CD8-positive, alpha-beta T cell (primary cell): ENCODE measurements at regions of chr1 and their contacts with region 1.

Region 1: GRCh38 chr1:32215629-32216480 is 6.3 kb downstream of the TMEM234 start:
- DNase-seq: peak in 8 of 9 experiments; percentile 16 to 74 (median 60)
- ATAC-seq: peak; percentile 97
- H3K4me3 ChIP-seq: no peak overlapping the region
- H3K4me3 Mint-ChIP-seq: no peak overlapping the region
- H3K27ac ChIP-seq: no peak overlapping the region
- H3K27ac Mint-ChIP-seq: peak overlapping the region; percentile 67
- H3K4me1 ChIP-seq: peaks cover 10% of the 10 kb centered on the region
- H3K4me1 Mint-ChIP-seq: peaks cover 14% of the 10 kb centered on the region
- H3K27me3 ChIP-seq: no peaks in the 10 kb centered on the region
- H3K27me3 Mint-ChIP-seq: no peaks in the 10 kb centered on the region
- CTCF ChIP-seq: peak; percentile 66

Region 2: DNA sequence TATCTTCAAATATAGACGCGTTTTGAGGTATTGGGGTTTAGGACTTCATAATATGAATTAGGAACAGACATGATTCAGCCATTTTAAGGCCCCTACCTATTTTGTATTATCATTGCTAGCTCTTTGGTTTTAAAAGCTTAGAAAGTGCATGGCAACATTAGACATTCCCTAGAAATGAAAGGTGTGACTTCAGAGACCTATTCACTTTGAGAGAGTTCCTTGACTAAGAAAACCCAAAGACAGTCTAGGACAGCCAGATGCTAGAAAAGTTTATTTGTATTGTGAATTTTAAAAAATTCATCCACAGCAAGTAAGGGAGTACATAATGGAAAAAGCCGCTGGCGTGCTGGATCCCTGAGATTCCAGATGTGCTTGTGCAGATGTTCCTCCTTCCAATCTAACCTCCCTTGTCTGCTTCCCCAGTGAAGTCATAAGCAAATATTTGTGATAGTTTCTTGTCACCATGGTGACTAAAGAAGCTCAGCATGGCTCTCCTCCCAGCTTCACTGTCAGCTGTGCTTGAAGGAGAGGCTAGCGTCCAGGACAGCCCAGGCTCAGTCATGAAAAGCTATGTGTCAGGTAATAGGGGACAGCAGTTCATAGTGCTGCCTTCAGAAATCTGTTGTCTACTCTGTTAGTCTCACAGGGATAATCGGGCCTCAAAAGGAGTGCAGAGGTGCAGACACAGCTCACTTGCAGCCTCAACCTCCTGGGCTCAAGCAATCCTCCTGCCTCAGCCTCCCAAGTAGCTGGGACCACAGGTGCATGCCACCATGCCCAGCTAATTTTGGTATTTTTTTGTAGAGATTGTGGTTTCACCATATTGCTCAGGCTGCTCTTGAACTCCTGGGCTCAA is 73.2 kb before region 1 on chr1:
- CTCF ChIA-PET with region 1: no interaction called
- POLR2A ChIA-PET with region 1: no interaction called
- intact Hi-C with region 1: no loop called
- DNase-seq: no peak
- ATAC-seq: no peak
- H3K4me3 ChIP-seq: no peak overlapping the region
- H3K4me3 Mint-ChIP-seq: no peak overlapping the region
- H3K27ac ChIP-seq: no peak overlapping the region
- H3K27ac Mint-ChIP-seq: peak overlapping the region; percentile 53
- H3K4me1 ChIP-seq: peaks cover 10% of the 10 kb centered on the region
- H3K4me1 Mint-ChIP-seq: peaks cover 61% of the 10 kb centered on the region
- H3K27me3 ChIP-seq: no peaks in the 10 kb centered on the region
- H3K27me3 Mint-ChIP-seq: no peaks in the 10 kb centered on the region
- CTCF ChIP-seq: no peak

Region 3: DNA sequence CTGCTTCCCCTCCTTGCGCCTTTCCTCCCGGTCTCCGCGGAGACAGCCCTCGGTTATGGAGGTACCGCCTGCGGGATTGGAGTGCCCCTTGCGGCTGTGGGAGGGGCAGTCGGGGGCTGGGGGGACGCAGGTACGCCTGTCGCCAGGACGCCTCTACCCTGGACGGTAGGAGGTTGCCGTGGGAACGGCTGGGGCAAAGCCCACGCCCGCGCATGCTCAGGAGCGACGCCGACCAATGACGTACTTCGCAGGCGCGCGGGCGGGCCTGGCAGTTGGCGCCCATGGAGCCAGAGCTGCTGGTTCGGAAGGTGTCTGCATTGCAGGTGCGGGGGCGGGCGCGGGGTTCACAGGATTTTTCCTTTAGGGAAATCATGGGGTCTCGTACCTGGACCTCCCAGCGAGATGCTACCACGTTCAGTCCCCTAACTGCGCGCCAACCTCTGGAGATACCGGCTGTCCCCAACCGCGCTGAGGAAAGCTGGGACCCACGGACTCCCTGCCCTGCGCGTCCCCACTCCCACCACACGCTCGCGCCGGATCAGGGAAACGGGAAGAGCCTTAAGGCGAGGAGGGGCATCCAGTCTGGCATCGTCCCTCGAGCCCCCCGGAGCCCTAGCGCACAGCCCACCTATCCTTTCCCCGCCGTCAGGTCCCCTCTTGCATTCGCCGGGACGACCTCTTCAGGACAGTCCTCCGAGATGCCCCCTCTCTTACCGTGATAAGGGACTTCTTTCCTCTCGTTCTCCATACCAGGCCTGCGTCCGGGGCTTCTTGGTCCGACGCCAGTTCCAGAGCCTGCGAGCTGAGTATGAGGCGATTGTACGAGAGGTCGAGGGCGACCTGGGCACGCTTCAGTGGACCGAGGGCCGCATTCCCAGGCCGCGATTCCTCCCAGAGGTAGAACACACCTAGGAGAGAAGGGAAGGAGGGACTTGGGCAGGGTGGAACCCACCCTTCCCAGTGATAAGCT is 10.2 kb before region 1 on chr1 and contains the start of gene IQCC:
- CTCF ChIA-PET with region 1: interaction called, 23 read pairs
- POLR2A ChIA-PET with region 1: interaction called, 8 read pairs
- intact Hi-C with region 1: no loop called
- DNase-seq: peak; percentile 68 to 94 (median 85)
- ATAC-seq: peak; percentile 57
- H3K4me3 ChIP-seq: peak within 1 kb of the TSS; percentile 65 to 77
- H3K4me3 Mint-ChIP-seq: peak within 1 kb of the TSS; percentile 87
- H3K27ac ChIP-seq: peak within 1 kb of the TSS; percentile 62 to 67
- H3K27ac Mint-ChIP-seq: peak within 1 kb of the TSS; percentile 84
- H3K4me1 ChIP-seq: peaks cover 30% of the 10 kb centered on the region
- H3K4me1 Mint-ChIP-seq: peaks cover 36% of the 10 kb centered on the region
- H3K27me3 ChIP-seq: no peaks in the 10 kb centered on the region
- H3K27me3 Mint-ChIP-seq: no peaks in the 10 kb centered on the region
- CTCF ChIP-seq: no peak
- total RNA-seq, gene IQCC: 1.3 to 2.0 TPM

Region 4: GRCh38 chr1:32240140-32240951 is 24.5 kb after region 1 on chr1:
- CTCF ChIA-PET with region 1: interaction called, 11 read pairs
- POLR2A ChIA-PET with region 1: interaction called, 5 read pairs
- intact Hi-C with region 1: no loop called
- DNase-seq: peak in 8 of 9 experiments; percentile 26 to 85 (median 76)
- ATAC-seq: peak; percentile 69
- H3K4me3 ChIP-seq: peak overlapping the region; percentile 76 to 89
- H3K4me3 Mint-ChIP-seq: peak overlapping the region; percentile 90
- H3K27ac ChIP-seq: peak overlapping the region; percentile 22 to 49
- H3K27ac Mint-ChIP-seq: peak overlapping the region; percentile 62
- H3K4me1 ChIP-seq: peaks cover 26% of the 10 kb centered on the region
- H3K4me1 Mint-ChIP-seq: peaks cover 23% of the 10 kb centered on the region
- H3K27me3 ChIP-seq: no peaks in the 10 kb centered on the region
- H3K27me3 Mint-ChIP-seq: no peaks in the 10 kb centered on the region
- CTCF ChIP-seq: peak; percentile 24

Region 5: DNA sequence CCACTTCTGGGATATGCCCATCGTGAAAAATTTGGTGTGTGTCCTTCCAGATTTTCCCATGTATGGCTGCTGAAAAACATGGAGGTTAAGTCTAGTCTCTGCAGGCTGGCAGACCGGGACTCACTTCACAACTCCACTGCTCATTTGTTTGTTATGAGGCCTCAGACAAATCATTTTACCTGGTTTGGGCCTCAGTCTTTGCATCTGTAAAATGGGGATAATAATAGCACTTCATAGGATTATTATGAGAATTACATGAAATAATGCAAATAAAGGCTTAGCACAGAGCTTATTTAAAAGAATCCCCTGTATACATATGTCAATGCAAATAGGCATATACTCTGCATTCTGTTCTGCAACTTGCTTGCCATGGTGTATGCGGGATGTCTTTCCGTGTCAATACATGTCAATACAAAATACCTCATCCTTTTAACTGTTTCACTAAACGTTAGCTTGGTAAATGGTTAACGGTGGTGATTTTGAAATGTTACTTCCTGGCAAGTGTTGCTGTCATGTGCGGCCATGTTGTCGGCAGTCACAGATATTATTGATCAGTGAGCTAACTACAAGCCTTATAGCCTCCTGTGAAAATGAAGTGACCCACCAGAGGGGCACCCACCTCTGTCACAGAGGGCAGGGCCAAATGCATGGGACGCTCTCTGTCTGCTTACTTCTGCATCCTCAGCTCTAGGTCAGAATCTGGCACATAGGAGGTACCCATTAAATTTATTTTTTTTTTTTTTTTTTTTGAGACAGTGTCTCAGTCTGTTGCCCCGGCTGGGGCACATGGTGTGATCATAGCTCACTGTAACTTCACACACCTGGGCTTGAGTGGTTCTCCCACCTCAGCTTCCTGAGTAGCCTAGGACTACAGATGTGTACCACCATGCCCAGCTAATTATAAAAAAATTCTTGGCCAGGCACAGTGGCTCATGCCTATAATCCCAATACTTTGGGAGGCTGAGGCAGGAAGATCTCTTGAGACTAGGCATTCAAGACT is 39.5 kb after region 1 on chr1:
- CTCF ChIA-PET with region 1: interaction called, 33 read pairs
- POLR2A ChIA-PET with region 1: interaction called, 5 read pairs
- intact Hi-C with region 1: no loop called
- DNase-seq: peak in 3 of 9 experiments; percentile 34 to 58 (median 35)
- ATAC-seq: peak; percentile 13
- H3K4me3 ChIP-seq: peak overlapping the region; percentile 45 to 84
- H3K4me3 Mint-ChIP-seq: peak overlapping the region; percentile 87
- H3K27ac ChIP-seq: peak overlapping the region; percentile 38 to 93
- H3K27ac Mint-ChIP-seq: peak overlapping the region; percentile 99
- H3K4me1 ChIP-seq: peaks cover 44% of the 10 kb centered on the region
- H3K4me1 Mint-ChIP-seq: peaks cover 55% of the 10 kb centered on the region
- H3K27me3 ChIP-seq: no peaks in the 10 kb centered on the region
- H3K27me3 Mint-ChIP-seq: no peaks in the 10 kb centered on the region
- CTCF ChIP-seq: no peak

Region 6: DNA sequence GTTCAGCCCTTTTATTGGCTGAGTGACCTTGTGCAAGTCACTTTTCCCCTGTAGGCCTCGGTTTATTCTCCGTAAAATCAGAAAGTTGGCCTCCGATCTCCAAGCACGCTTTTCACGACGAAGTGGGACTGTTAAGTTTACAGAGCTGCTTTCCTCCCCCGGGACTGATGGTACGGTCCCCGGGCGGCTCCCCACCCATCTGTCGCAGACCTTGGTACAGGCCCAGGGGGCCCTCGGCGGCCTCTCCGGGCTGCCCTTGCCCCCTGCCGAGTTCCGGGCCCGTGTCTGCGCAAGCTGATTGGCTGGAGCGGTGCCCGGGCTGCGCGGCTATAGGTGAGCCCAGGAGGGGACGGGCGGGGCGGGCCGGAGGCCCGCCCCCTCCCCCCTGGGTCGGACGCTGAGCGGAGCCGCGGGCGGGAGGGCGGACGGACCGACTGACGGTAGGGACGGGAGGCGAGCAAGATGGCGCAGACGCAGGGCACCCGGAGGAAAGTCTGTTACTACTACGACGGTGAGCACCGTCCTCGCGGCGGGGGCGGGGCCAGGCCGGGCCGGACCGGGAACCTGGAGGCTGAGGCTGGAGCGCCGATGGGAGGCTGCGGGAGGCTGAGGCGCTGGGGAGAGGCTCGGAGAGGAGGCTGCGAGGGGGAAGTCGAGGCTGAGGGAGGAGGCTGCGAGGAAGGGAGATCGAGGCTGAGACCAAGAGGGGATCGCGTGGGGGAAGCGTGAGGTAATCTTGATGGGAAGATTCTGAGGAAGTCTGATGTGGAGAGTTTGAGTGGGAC is 76.0 kb after region 1 on chr1 and contains the start of gene HDAC1:
- CTCF ChIA-PET with region 1: interaction called, 25 read pairs
- POLR2A ChIA-PET with region 1: interaction called, 3 read pairs
- intact Hi-C with region 1: loop called in 1 of 2 experiments (anchors 2 kb)
- DNase-seq: peak; percentile 94 to 98 (median 97)
- ATAC-seq: peak; percentile 93
- H3K4me3 ChIP-seq: peak within 1 kb of the TSS; percentile 84 to 92
- H3K4me3 Mint-ChIP-seq: peak within 1 kb of the TSS; percentile 100
- H3K27ac ChIP-seq: peak within 1 kb of the TSS; percentile 68 to 69
- H3K27ac Mint-ChIP-seq: peak within 1 kb of the TSS; percentile 98
- H3K4me1 ChIP-seq: peaks cover 45% of the 10 kb centered on the region
- H3K4me1 Mint-ChIP-seq: peaks cover 52% of the 10 kb centered on the region
- H3K27me3 ChIP-seq: no peaks in the 10 kb centered on the region
- H3K27me3 Mint-ChIP-seq: no peaks in the 10 kb centered on the region
- CTCF ChIP-seq: no peak
- total RNA-seq, gene HDAC1: 57.8 to 61.4 TPM

Region 7: GRCh38 chr1:32377541-32378220 is 161.8 kb after region 1 on chr1:
- CTCF ChIA-PET with region 1: interaction called, 34 read pairs
- POLR2A ChIA-PET with region 1: interaction called, 7 read pairs
- intact Hi-C with region 1: loop called (anchors 1 to 2 kb)
- DNase-seq: no peak
- ATAC-seq: no peak
- H3K4me3 ChIP-seq: no peak overlapping the region
- H3K4me3 Mint-ChIP-seq: no peak overlapping the region
- H3K27ac ChIP-seq: no peak overlapping the region
- H3K27ac Mint-ChIP-seq: no peak overlapping the region
- H3K4me1 ChIP-seq: no peaks in the 10 kb centered on the region
- H3K4me1 Mint-ChIP-seq: peaks cover 2% of the 10 kb centered on the region
- H3K27me3 ChIP-seq: no peaks in the 10 kb centered on the region
- H3K27me3 Mint-ChIP-seq: no peaks in the 10 kb centered on the region
- CTCF ChIP-seq: no peak

Region 8: DNA sequence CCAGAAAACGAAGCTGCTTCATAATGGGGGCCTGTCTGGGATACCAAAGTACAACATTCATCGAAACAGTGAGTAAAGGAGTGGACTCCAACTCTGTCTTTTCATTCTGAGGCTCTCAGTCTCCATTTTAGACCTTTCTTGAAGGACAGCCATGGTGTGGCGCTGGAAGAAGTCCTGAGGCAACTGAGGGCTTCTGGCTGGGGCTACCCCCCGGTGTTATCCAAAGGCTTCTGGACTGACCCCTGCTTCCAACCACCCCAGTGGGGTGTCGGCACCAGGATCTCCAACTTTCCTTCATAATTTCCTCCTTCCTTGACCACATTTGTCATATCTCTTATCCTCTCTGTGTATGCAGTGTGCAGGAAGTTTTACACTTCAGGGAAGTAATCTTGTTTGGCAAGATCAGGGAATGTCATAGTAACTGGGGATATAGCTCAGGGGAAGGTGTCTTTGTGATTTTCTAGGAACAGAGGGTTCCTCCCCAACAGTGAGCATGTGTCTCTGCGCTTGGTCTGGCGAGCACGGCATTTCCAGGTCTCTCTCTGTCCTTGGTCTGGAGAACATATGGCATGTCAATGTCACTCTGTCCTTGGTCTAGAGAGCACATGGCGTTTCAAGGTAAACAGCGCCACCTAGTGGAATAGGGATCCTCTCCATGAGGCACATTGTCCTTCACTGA is 197.8 kb after region 1 on chr1:
- CTCF ChIA-PET with region 1: interaction called, 23 read pairs
- POLR2A ChIA-PET with region 1: interaction called, 4 read pairs
- intact Hi-C with region 1: loop called (anchors 1 kb)
- DNase-seq: peak; percentile 32 to 88 (median 75)
- ATAC-seq: peak; percentile 80
- H3K4me3 ChIP-seq: no peak overlapping the region
- H3K4me3 Mint-ChIP-seq: no peak overlapping the region
- H3K27ac ChIP-seq: no peak overlapping the region
- H3K27ac Mint-ChIP-seq: no peak overlapping the region
- H3K4me1 ChIP-seq: no peaks in the 10 kb centered on the region
- H3K4me1 Mint-ChIP-seq: peaks cover 3% of the 10 kb centered on the region
- H3K27me3 ChIP-seq: no peaks in the 10 kb centered on the region
- H3K27me3 Mint-ChIP-seq: peaks cover 10% of the 10 kb centered on the region
- CTCF ChIP-seq: peak; percentile 89